Naive thymus-derived CD4-positive, alpha-beta T cell (primary cell): ENCODE measurements at regions of chr3 and their contacts with region 1.

Region 1: DNA sequence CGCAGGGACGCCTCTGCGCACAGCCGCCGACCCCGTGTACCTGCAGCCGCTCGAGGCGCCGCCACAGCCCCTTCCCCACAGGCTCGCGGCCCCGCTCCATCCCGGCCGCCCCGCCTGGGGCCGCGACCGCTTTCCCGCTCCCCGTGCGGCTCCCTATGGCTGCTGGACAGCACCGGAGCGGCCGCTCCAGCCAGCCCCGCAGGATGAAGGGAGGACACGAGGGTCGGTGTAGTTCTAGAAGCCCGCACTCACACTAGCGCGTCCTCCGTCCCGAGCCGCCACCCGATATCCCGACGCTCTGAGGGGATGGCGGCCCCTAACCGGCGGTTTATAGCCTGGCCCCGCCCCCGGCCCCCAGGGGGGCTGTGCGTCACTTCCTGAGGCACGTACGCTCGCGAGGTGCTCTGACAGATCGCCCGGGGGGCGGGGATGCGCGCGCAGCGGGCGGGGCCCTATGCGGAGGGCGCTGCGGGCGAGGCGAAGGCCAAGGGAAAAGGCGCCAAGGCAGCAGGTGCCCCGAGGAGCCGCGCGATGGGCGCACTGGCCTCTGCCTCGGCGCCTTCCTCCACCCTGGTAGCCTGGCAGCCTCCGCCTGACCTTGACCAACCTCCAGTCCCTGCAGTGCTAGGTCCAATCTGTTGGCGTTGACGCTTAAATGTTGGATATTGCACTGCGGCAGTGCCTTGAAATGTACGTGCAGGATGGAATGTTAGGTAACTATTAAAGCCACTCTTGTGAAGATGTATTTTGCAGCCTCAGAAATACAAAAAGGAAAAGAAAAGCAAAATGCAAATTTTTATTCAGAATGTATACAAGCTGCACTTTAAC is at the start of gene TFRC:
- DNase-seq: peak; percentile 92 to 98 (median 95)
- ATAC-seq: peak; percentile 98
- H3K4me3 ChIP-seq: peak within 1 kb of the TSS; percentile 70
- H3K4me3 Mint-ChIP-seq: peak within 1 kb of the TSS; percentile 89 to 100 (median 96)
- H3K27ac ChIP-seq: peak within 1 kb of the TSS; percentile 96
- H3K27ac Mint-ChIP-seq: peak within 1 kb of the TSS; percentile 86 to 99 (median 95)
- H3K4me1 ChIP-seq: peaks cover 17 to 25% of the 10 kb centered on the region in 2 donors
- H3K4me1 Mint-ChIP-seq: peaks cover 22 to 46% (median 39%) of the 10 kb centered on the region in 7 donors
- H3K27me3 ChIP-seq: no peaks in the 10 kb centered on the region
- H3K27me3 Mint-ChIP-seq: no peaks in the 10 kb centered on the region
- total RNA-seq, gene TFRC: 51.3 to 417 (median 144) TPM

Region 2: GRCh38 chr3:195909644-195910508 is 172.1 kb before region 1 on chr3:
- CTCF ChIA-PET with region 1: no interaction called
- POLR2A ChIA-PET with region 1: no interaction called
- intact Hi-C with region 1: loop called (anchors 1 to 5 kb)
- DNase-seq: peak; percentile 82 to 93 (median 87)
- ATAC-seq: peak; percentile 81
- H3K4me3 ChIP-seq: peak overlapping the region; percentile 54
- H3K4me3 Mint-ChIP-seq: peak overlapping the region; percentile 40 to 97 (median 70)
- H3K27ac ChIP-seq: peak overlapping the region; percentile 68
- H3K27ac Mint-ChIP-seq: peak overlapping the region in 6 of 9 donors; percentile 10 to 90 (median 68)
- H3K4me1 ChIP-seq: peaks cover 26 to 27% of the 10 kb centered on the region in 2 donors
- H3K4me1 Mint-ChIP-seq: peaks cover 25 to 39% (median 33%) of the 10 kb centered on the region in 7 donors
- H3K27me3 ChIP-seq: no peaks in the 10 kb centered on the region
- H3K27me3 Mint-ChIP-seq: no peaks in the 10 kb centered on the region

Region 3: GRCh38 chr3:196179380-196180308 is 97.6 kb after region 1 on chr3:
- CTCF ChIA-PET with region 1: interaction called, 6 read pairs
- POLR2A ChIA-PET with region 1: interaction called, 40 read pairs
- intact Hi-C with region 1: loop called (anchors 1 kb)
- DNase-seq: peak; percentile 56 to 91 (median 87)
- ATAC-seq: peak; percentile 93
- H3K4me3 ChIP-seq: peak overlapping the region; percentile 41
- H3K4me3 Mint-ChIP-seq: peak overlapping the region; percentile 66 to 88 (median 72)
- H3K27ac ChIP-seq: peak overlapping the region; percentile 79
- H3K27ac Mint-ChIP-seq: peak overlapping the region; percentile 86 to 99 (median 93)
- H3K4me1 ChIP-seq: peaks cover 29 to 44% of the 10 kb centered on the region in 2 donors
- H3K4me1 Mint-ChIP-seq: peaks cover 16 to 62% (median 35%) of the 10 kb centered on the region in 7 donors
- H3K27me3 ChIP-seq: no peaks in the 10 kb centered on the region
- H3K27me3 Mint-ChIP-seq: no peaks in the 10 kb centered on the region

Region 4: GRCh38 chr3:196207833-196208607 is 126.0 kb after region 1 on chr3:
- CTCF ChIA-PET with region 1: interaction called, 209 read pairs
- POLR2A ChIA-PET with region 1: no interaction called
- intact Hi-C with region 1: loop called in 1 of 2 experiments (anchors 1 kb)
- DNase-seq: peak in 8 of 9 donors; percentile 31 to 76 (median 48)
- ATAC-seq: peak; percentile 81
- H3K4me3 ChIP-seq: peak overlapping the region; percentile 56
- H3K4me3 Mint-ChIP-seq: peak overlapping the region; percentile 68 to 89 (median 86)
- H3K27ac ChIP-seq: no peak overlapping the region
- H3K27ac Mint-ChIP-seq: peak overlapping the region in 8 of 9 donors; percentile 32 to 86 (median 56)
- H3K4me1 ChIP-seq: peaks cover 0 to 3% of the 10 kb centered on the region in 2 donors
- H3K4me1 Mint-ChIP-seq: peaks cover 5 to 24% (median 12%) of the 10 kb centered on the region in 7 donors
- H3K27me3 ChIP-seq: no peaks in the 10 kb centered on the region
- H3K27me3 Mint-ChIP-seq: peaks cover 0 to 31% (median 0%) of the 10 kb centered on the region in 5 donors

Region 5: DNA sequence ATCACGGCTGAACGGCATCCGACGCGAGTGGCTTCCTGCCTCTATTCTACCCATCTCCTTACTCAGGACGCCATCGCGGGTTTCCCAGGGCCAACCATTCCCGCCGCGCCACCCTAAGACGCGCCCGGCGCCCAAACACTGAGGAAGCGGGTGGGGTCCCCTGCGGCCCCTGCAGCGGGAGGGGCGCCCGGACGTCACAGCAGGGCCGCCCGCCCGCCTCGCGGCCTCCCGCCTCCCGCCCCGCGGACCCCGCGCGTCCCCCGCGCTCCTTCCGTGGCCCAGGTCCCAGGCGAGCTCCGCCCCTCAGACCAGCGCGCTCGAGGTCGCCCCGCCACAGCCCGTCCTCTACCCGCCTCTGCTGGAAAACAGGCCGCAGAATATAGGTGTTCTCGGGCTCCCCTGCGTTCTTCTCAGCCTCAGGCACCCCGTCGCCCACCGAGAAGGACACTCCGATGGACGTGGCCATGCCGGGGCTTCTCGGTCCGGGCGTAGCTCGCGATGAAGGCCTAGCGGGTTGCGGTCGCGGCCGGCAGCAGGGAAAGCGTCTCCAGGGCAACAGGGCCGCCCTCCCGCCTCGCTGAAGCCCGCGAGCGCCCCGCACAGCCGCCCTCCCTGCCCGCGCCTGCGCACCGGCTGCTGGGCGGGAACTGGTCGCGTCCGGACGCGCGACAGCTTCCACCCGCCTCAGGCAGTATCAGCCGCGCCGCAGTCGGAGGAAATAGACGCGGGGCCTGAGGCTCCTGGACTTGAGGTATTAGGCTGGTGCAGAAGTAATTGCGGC is 235.9 kb after region 1 on chr3 and contains the start of gene DYNLT2B:
- CTCF ChIA-PET with region 1: no interaction called
- POLR2A ChIA-PET with region 1: interaction called, 5 read pairs
- intact Hi-C with region 1: loop called in 1 of 2 experiments (anchors 1 kb)
- DNase-seq: peak; percentile 82 to 91 (median 88)
- ATAC-seq: peak; percentile 94
- H3K4me3 ChIP-seq: peak within 1 kb of the TSS; percentile 89
- H3K4me3 Mint-ChIP-seq: peak within 1 kb of the TSS; percentile 82 to 95 (median 94)
- H3K27ac ChIP-seq: peak within 1 kb of the TSS; percentile 90
- H3K27ac Mint-ChIP-seq: peak within 1 kb of the TSS; percentile 88 to 98 (median 94)
- H3K4me1 ChIP-seq: no peaks in the 10 kb centered on the region
- H3K4me1 Mint-ChIP-seq: peaks cover 0 to 23% (median 9%) of the 10 kb centered on the region in 7 donors
- H3K27me3 ChIP-seq: no peaks in the 10 kb centered on the region
- H3K27me3 Mint-ChIP-seq: no peaks in the 10 kb centered on the region
- total RNA-seq, gene DYNLT2B: 3.3 to 20.8 (median 5.1) TPM

Region 6: GRCh38 chr3:196632046-196632751 is 550.2 kb after region 1 on chr3:
- CTCF ChIA-PET with region 1: no interaction called
- POLR2A ChIA-PET with region 1: no interaction called
- intact Hi-C with region 1: loop called in 1 of 2 experiments (anchors 10 kb)
- DNase-seq: peak; percentile 69 to 91 (median 88)
- ATAC-seq: peak; percentile 89
- H3K4me3 ChIP-seq: peak overlapping the region; percentile 48
- H3K4me3 Mint-ChIP-seq: peak overlapping the region; percentile 80 to 96 (median 90)
- H3K27ac ChIP-seq: peak overlapping the region; percentile 78
- H3K27ac Mint-ChIP-seq: peak overlapping the region; percentile 93 to 99 (median 97)
- H3K4me1 ChIP-seq: peaks cover 30 to 31% of the 10 kb centered on the region in 2 donors
- H3K4me1 Mint-ChIP-seq: peaks cover 31 to 74% (median 62%) of the 10 kb centered on the region in 7 donors
- H3K27me3 ChIP-seq: no peaks in the 10 kb centered on the region
- H3K27me3 Mint-ChIP-seq: no peaks in the 10 kb centered on the region